HepG2 (cell line): ENCODE measurements at regions of chr19 and their contacts with region 1.

Region 1: DNA sequence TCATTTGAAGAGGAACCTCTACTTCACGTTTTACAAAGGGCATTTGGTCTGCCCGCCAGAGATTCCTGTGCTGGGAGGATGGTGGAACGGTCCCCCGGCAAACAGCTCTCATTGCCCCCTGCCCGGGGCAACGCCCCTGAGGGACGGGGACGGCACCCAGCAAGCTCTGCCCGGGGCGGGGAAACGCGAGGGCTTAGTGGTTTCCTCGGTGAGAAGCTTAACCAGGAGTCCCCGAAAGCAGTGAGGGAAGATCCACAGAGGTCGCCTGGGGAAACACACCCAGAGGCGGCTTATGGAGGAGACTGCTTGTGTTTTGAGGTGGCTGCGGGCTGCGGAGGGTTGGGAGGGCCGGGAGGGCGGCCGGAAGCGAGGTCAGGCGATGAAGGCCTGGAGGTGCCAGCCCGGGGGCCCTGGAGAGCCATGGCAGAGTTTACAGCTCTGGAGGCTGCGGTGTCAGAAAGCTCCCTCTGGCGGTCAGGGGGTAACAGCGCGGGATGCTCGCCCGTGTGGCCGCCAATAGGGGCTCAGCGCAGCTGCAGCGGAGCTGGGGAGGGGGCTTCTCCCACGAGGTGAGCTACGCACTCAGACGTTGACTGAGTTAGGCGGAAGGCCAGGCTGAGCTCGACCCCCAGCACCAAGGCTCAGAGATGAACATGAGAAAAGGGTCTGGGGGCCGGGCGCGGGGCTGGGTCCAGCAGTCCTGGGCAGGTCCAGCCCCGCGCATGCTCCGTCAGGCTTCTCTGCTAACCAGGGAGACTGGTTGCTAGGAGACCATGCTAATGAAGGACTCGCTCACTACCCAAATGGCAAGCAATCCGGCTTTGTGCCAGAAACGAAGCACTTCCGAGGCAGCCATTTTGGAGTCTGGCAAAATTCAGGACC is 652 bp upstream of the TPGS1 start:
- DNase-seq: peak; percentile 99
- ATAC-seq: peak; percentile 82
- H3K4me3 ChIP-seq: peak overlapping the region; percentile 93 to 99 (median 97)
- H3K27ac ChIP-seq: peak overlapping the region; percentile 98
- H3K4me1 ChIP-seq: peaks cover 33% of the 10 kb centered on the region
- H3K27me3 ChIP-seq: no peaks in the 10 kb centered on the region
- CTCF ChIP-seq: peak; percentile 99
- EP300 ChIP-seq: no peak
- POLR2A ChIP-seq: peak; percentile 39 to 44; a peak in 1 of 4 replicates
- RAD21 ChIP-seq: peak; percentile 92

Region 2: DNA sequence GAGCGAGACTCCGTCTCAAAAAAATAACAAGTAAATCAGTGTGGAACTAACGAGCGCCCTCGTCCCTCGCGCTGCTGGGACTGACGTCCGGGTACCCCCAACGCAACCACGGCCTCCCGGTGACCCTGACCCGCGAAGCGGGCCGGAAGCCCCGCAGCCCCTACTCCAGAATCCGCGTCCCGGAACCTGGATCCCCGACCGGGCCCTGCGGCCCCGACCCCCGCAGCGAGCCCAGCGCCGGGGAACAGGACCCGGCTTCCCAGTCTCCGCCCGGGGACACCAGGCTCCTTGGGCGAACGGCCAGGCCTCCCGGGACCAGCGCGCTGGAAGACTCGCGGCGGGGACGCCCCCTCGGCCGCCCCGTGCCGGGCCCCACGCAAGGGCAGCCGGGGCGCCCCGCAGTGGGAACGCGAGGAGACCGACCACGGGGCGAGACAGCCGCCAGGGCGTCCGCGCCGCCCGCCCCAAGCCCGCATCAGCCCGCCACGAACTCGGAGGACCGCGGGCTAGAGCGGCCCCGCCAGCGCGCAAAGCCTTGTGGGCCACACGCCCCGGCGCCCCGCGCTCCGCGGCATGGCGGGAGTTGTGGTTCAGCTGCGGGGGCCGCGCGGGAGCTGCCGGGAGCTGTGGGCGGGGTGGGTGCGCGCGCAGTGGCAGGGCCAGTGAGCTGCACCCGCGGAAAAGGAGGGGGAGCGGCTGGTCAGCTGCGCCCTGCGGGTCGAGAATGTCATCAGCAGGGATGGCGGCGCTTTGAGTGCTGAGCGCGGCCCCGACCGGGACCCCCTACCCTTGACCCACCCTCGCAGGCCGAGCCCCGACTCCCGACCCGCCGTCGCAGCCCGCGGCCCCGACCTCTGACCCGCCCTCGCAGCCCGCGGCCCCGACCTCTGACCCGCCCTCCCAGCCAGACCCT is 17.9 kb before region 1 on chr19:
- CTCF ChIA-PET with region 1: no interaction called
- POLR2A ChIA-PET with region 1: interaction called, 23 read pairs
- in situ Hi-C with region 1: no loop called
- intact Hi-C with region 1: no loop called
- DNase-seq: peak; percentile 82
- ATAC-seq: peak; percentile 79
- H3K4me3 ChIP-seq: peak overlapping the region; percentile 92 to 94 (median 93)
- H3K27ac ChIP-seq: peak overlapping the region; percentile 99
- H3K4me1 ChIP-seq: peaks cover 57% of the 10 kb centered on the region
- H3K27me3 ChIP-seq: no peaks in the 10 kb centered on the region
- CTCF ChIP-seq: no peak; the same call in 1 of the 2 replicates
- EP300 ChIP-seq: no peak
- POLR2A ChIP-seq: peak; percentile 53 to 80; a peak in 2 of 4 replicates
- RAD21 ChIP-seq: peak; percentile 55

Region 3: DNA sequence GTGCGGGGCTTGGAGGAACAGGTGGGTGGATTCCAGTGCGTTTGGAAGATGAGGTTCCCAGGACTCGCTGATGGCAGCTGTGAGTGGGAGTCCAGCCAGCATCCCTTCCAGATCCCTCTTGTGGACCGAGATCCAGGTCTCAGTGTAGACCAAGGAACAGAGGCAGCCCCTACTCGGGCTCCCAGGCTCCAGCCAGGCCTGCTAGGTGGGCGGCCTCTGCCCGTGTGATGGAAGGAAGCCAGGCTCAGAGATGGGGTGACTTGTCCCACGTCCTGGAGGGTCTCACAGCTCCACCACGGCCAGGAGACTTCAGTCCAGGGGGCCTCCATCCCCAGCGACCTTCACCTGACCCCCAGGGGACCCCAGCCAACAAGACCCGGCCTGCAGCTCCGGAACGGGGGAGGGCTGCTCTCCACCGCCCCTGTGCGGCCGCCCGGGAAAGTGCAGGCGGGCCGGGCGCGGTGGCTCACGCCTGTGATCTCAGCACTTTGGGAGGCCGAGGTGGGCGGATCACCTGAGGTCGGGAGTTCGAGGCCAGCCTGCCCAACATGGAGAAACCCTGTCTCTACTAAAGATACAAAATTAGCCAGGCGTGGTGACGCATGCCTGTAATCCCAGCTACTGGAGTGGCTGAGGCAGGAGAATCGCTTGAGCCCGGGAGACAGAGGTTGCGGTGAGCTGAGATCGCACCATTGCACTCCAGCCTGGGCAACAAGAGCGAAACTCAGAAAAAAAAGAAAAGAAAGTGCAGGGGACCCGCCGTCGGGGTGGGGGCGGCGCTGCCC is 11.1 kb before region 1 on chr19:
- CTCF ChIA-PET with region 1: interaction called, 5 read pairs
- POLR2A ChIA-PET with region 1: interaction called, 23 read pairs
- in situ Hi-C with region 1: no loop called
- intact Hi-C with region 1: no loop called
- DNase-seq: no peak
- ATAC-seq: peak; percentile 17
- H3K4me3 ChIP-seq: peak overlapping the region in 1 of 3 experiments; percentile 46; a peak in 1 of 6 replicates
- H3K27ac ChIP-seq: no peak overlapping the region
- H3K4me1 ChIP-seq: peaks cover 51% of the 10 kb centered on the region
- H3K27me3 ChIP-seq: peaks cover 0 to 4% of the 10 kb centered on the region in 2 experiments; a peak in 2 of 5 replicates
- CTCF ChIP-seq: peak; percentile 93
- EP300 ChIP-seq: no peak
- POLR2A ChIP-seq: no peak
- RAD21 ChIP-seq: peak; percentile 70

Region 4: DNA sequence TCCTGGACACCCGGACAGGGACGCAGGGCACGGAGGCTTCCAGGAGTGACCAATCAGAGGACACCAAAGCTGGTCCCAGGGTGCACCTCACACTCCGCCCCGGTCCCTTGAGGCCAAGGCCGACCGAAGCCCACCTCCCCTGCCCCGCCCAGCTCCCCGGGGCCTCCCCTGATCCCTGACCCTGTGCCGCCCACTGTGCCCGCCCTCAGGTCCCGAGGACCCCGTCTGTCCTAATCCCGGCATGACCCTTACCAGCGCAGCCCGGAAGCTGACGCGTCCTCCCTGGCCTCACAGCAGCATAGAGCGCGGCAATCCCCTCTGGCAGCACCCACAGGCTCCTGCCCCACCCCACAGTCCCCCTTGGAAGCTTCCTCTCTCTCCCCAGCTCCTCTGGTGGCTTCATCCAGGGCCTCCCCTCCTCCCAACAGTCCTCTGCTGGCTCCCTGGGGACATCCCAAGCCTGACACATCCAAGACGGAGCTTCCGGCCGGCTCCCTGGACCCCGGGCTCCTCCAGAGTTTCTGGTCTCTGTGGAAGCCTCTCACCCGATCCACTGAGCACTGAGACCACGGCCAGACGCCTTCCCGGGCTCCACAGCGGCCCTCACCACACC is 17.5 kb after region 1 on chr19:
- CTCF ChIA-PET with region 1: no interaction called
- POLR2A ChIA-PET with region 1: interaction called, 15 read pairs
- in situ Hi-C with region 1: no loop called
- intact Hi-C with region 1: no loop called
- DNase-seq: peak; percentile 80
- ATAC-seq: peak; percentile 90
- H3K4me3 ChIP-seq: peak overlapping the region; percentile 30 to 63 (median 42); a peak in 5 of 6 replicates
- H3K27ac ChIP-seq: peak overlapping the region; percentile 95
- H3K4me1 ChIP-seq: peaks cover 58% of the 10 kb centered on the region
- H3K27me3 ChIP-seq: no peaks in the 10 kb centered on the region
- CTCF ChIP-seq: peak; percentile 35
- EP300 ChIP-seq: peak; percentile 84 to 91; a peak in 3 of 4 replicates
- POLR2A ChIP-seq: peak; percentile 59 to 79; a peak in 3 of 4 replicates
- RAD21 ChIP-seq: no peak

Region 5: GRCh38 chr19:531009-531752 is 24.5 kb after region 1 on chr19:
- CTCF ChIA-PET with region 1: interaction called, 16 read pairs
- POLR2A ChIA-PET with region 1: interaction called, 33 read pairs
- in situ Hi-C with region 1: no loop called
- intact Hi-C with region 1: no loop called
- DNase-seq: peak; percentile 80
- ATAC-seq: peak; percentile 68
- H3K4me3 ChIP-seq: peak overlapping the region; percentile 63 to 98 (median 97)
- H3K27ac ChIP-seq: peak overlapping the region; percentile 94
- H3K4me1 ChIP-seq: peaks cover 56% of the 10 kb centered on the region
- H3K27me3 ChIP-seq: no peaks in the 10 kb centered on the region
- CTCF ChIP-seq: peak; percentile 34
- EP300 ChIP-seq: no peak
- POLR2A ChIP-seq: peak; percentile 39 to 78
- RAD21 ChIP-seq: no peak; the same call in none of the 2 replicates

Region 6: GRCh38 chr19:543910-544608 is 37.4 kb after region 1 on chr19 and contains the start of gene GZMM:
- CTCF ChIA-PET with region 1: no interaction called
- POLR2A ChIA-PET with region 1: no interaction called
- in situ Hi-C with region 1: no loop called
- intact Hi-C with region 1: no loop called
- DNase-seq: no peak
- ATAC-seq: peak; percentile 13
- H3K4me3 ChIP-seq: no peak within 1 kb of the TSS
- H3K27ac ChIP-seq: no peak within 1 kb of the TSS
- H3K4me1 ChIP-seq: no peaks in the 10 kb centered on the region
- H3K27me3 ChIP-seq: peaks cover 0 to 8% of the 10 kb centered on the region in 2 experiments; a peak in 2 of 5 replicates
- CTCF ChIP-seq: no peak
- EP300 ChIP-seq: no peak
- POLR2A ChIP-seq: peak in 1 of 2 experiments; percentile 46; a peak in 2 of 4 replicates
- RAD21 ChIP-seq: no peak
- total RNA-seq, gene GZMM: not detected in 2 replicates